Head of caudate nucleus (tissue), 42 donors: ENCODE measurements at regions of chr1 and their contacts with region 1.

Region 1: GRCh38 chr1:54052934-54053744 is at the starts of genes TCEANC2 and TMEM59:
- DNase-seq: peak; percentile 95 to 99 (median 98)

Region 2: GRCh38 chr1:53837924-53838652 is 215.1 kb before region 1 on chr1 and contains the start of gene NDC1:
- intact Hi-C with region 1: loop called (anchors 1 kb)
- DNase-seq: peak; percentile 85 to 98 (median 94)

Region 3: GRCh38 chr1:53945433-53946251 is 107.5 kb before region 1 on chr1 and contains the start of gene IFT25:
- intact Hi-C with region 1: loop called (anchors 10 kb)
- DNase-seq: peak; percentile 94 to 100 (median 98)

Region 4: DNA sequence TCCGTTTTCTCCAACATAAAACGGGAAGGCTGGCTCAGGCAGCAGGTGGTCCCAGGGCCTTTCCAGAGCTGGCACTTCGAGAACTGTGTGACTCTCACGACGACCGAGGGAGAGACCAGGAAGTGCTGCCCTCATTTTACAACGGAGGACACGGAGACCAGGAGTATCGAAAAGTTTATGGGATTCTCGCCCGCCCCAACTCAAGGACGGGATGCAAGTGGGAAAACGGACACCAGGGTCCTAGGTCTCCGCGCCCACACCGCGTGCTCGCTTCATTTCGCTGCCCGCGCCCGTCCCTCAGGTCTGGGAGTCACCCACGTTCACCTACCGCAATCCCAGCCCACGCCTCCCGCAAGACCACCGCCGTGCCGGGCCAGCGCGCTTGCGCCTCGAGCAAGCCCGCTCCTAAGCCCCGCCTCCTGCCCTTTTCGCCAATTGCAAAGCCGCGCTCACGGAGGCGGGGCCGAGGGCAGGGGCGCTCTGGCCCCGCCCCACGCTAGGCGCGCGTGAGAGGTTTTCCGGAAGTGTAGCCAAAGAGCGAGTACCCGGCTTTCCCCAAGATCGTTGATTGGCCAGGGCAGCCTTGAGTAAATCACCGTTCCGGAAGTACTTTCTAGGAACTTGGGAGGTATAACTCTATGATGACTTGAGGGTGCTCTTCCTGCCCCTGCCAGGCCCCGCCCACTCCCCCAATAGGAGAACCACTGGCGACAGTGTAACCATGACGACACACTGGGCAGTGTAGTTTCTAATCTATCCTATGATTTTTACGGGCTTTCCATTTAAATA is 711.2 kb after region 1 on chr1 and contains the start of gene PARS2:
- intact Hi-C with region 1: loop called (anchors 10 kb)
- DNase-seq: peak; percentile 92 to 98 (median 96)